Caco-2 (cell line): ENCODE measurements at regions of chr16 and their contacts with region 1.

Region 1: DNA sequence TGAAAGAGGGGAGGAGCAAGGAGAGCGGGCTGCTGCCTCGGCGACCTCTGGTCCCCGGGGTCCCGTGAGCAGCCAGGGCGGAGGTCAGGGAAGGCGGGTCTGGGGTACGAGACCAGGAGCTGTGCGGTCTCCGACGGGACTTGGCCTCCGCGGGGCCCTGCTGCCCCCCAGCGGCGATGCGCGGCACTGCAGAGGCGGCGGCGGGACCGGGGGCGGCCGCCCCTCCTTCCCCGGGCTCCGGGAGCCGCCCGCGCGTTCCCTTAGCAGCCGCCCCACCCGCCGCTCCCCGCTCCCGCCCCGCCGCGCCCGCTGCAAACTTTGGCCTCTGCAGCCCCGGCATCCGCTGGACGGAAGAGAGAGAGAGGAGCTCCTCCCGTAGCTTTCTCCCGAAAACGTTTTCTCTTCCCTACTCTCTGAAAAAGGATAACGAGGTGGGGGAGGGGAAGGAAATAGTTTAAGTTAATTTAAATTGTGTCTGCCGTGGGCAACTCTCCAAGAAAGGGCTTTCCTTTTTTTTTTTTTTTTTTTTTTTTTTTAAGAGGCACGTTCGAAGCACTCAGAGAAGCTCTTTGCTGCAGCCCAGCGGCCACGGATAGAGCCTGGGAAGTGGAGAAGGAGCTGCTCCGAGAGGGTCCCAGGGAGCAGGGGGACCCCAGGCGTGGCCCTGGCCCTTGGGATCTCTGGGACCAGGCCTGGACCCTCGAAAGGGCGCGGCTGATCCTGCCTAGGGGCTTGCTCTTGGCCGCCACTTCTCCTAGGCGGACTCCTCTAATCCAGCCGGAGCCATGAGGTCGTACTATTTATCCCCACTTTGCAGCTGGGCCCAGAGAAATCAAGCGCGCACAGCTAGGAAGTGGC is 43.2 kb downstream of the C16orf82 start:
- DNase-seq: peak; percentile 81 to 89
- H3K4me3 ChIP-seq: peak overlapping the region; percentile 34
- H3K4me3 Mint-ChIP-seq: peak overlapping the region; percentile 59
- H3K27ac Mint-ChIP-seq: no peak overlapping the region
- H3K4me1 ChIP-seq: peaks cover 8% of the 10 kb centered on the region; the same call in 1 of the 2 replicates
- H3K4me1 Mint-ChIP-seq: peaks cover 7% of the 10 kb centered on the region
- H3K27me3 ChIP-seq: no peaks in the 10 kb centered on the region
- H3K27me3 Mint-ChIP-seq: peaks cover 7% of the 10 kb centered on the region
- CTCF ChIP-seq: peak; percentile 70 to 72

Region 2: DNA sequence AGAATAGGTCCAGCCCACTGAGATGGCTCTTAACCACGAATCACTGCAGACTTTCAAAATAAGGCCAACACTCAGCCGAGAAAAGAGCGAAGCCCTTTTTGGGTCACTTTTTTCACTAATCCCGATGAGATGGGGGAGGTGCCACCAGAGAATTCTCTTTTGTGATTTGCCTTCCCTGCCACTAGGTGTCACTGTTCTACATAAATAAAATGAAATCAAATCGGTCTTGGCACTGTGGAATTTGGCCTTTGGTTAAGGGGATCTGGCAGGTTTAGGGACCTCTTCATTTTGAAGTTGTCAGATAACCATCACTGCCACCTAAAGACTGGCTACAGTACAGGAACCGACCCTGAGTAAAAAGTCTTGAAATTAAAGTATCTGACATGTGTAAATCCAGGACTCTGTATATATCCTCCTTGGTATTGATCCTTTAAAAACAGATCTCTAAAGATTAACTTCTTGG is 1271.1 kb before region 1 on chr16:
- CTCF ChIA-PET with region 1: no interaction called
- POLR2A ChIA-PET with region 1: no interaction called
- intact Hi-C with region 1: loop called (anchors 5 kb)
- DNase-seq: peak; percentile 31
- H3K4me3 ChIP-seq: no peak overlapping the region
- H3K4me3 Mint-ChIP-seq: no peak overlapping the region
- H3K27ac Mint-ChIP-seq: no peak overlapping the region
- H3K4me1 ChIP-seq: no peaks in the 10 kb centered on the region
- H3K4me1 Mint-ChIP-seq: no peaks in the 10 kb centered on the region
- H3K27me3 ChIP-seq: no peaks in the 10 kb centered on the region
- H3K27me3 Mint-ChIP-seq: peaks cover 2% of the 10 kb centered on the region
- CTCF ChIP-seq: peak; percentile 52 to 57

Region 3: DNA sequence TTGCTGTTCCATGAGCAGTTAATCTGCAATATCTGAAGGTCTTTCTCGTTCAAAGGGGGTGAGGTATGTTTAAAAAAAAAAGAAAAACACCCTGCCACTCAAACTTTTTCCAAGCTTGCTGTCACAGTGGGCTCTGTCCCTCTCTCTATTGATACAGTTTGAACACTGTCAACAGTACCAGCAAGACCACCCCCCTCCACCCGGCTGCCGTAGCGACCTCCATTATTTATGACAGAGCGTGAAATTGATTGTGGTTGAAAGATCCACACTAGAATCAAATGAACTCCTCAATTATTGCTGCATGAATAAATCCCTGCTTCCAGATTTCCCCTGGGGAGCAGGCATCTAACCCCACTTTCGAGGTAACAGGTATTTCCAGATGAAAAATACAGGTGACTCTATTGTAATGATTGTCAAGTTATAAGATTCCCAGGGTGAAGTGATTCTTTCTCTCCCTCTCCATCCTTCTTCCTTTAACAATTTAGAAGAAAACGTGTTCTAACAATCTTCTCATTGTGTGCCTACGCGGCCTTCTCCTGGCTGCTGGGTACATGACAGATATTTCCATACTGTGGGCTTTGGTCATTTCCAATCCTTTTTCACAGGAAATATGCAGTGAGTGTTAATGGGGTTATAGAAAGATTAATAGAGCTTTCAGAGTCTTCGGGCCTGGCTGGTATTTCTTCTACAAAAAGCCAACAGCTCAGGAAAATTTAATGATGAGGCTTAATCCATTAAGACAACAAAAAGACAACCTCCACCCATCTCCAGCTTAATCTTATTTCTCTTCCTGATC is 178.9 kb before region 1 on chr16:
- CTCF ChIA-PET with region 1: interaction called, 14 read pairs
- POLR2A ChIA-PET with region 1: no interaction called
- intact Hi-C with region 1: no loop called
- DNase-seq: no peak
- H3K4me3 ChIP-seq: no peak overlapping the region
- H3K4me3 Mint-ChIP-seq: no peak overlapping the region
- H3K27ac Mint-ChIP-seq: no peak overlapping the region
- H3K4me1 ChIP-seq: no peaks in the 10 kb centered on the region
- H3K4me1 Mint-ChIP-seq: no peaks in the 10 kb centered on the region
- H3K27me3 ChIP-seq: no peaks in the 10 kb centered on the region
- H3K27me3 Mint-ChIP-seq: peaks cover 11% of the 10 kb centered on the region
- CTCF ChIP-seq: no peak

Region 4: DNA sequence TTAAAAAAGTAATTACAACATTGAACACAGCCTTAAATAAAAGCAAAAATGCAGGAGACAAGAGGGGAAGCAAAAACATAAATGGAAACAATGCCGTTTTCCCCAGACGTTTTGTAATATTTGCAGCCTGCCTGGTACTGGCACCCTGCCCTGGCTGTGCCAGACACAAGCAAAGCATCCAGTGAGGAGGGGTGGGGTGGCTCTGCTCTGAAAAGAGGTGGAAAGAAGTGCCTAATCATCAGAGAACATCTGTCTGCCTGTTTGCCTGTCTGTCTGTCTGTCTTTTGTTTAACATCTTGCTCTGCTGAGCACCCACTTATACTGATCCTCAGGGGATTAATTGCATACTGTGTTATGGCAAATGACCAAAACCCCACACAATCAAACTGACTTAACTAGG is 19.5 kb after region 1 on chr16:
- CTCF ChIA-PET with region 1: no interaction called
- POLR2A ChIA-PET with region 1: no interaction called
- intact Hi-C with region 1: no loop called
- DNase-seq: no peak
- H3K4me3 ChIP-seq: no peak overlapping the region
- H3K4me3 Mint-ChIP-seq: no peak overlapping the region
- H3K27ac Mint-ChIP-seq: no peak overlapping the region
- H3K4me1 ChIP-seq: no peaks in the 10 kb centered on the region
- H3K4me1 Mint-ChIP-seq: no peaks in the 10 kb centered on the region
- H3K27me3 ChIP-seq: no peaks in the 10 kb centered on the region
- H3K27me3 Mint-ChIP-seq: no peaks in the 10 kb centered on the region
- CTCF ChIP-seq: no peak

Region 5: DNA sequence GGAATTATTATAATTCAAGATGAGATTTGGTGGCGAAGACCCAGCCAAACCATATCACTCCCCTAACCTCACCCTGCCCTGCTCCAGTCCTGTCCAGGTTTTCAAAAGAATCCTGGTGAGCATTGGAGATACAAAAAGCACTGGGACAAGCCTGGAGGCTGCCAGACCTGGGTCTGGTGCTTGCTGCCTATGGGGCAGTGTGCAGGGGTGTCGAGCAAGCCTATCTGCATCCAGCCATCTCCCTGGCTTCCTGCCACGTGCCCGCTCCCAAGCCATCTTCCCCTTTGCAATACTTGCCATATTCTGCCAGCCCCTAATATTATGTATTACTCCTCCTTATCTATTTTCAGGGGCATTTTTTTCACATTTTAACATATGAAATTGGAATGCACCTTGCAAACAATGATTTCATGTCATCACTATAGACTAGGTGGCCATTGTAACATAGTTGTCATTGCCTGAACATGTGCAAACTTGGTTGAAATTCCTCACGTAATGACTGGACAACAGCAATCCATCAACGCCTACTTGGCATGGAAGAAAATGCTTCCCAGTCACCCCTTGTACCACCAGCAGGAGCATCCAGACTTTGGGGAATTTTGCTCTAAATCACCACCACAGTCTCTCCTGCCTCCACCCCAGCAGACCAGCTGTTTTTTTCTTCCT is 85.3 kb after region 1 on chr16:
- CTCF ChIA-PET with region 1: interaction called, 11 read pairs
- POLR2A ChIA-PET with region 1: no interaction called
- intact Hi-C with region 1: no loop called
- DNase-seq: no peak
- H3K4me3 ChIP-seq: no peak overlapping the region
- H3K4me3 Mint-ChIP-seq: no peak overlapping the region
- H3K27ac Mint-ChIP-seq: no peak overlapping the region
- H3K4me1 ChIP-seq: peaks cover 4% of the 10 kb centered on the region; the same call in 1 of the 2 replicates
- H3K4me1 Mint-ChIP-seq: no peaks in the 10 kb centered on the region
- H3K27me3 ChIP-seq: no peaks in the 10 kb centered on the region
- H3K27me3 Mint-ChIP-seq: peaks cover 3% of the 10 kb centered on the region
- CTCF ChIP-seq: no peak